Activated naive CD4-positive, alpha-beta T cell treated with anti-CD3 and anti-CD28 coated beads for 36 hours (primary cell): ENCODE measurements at regions of chr5 and their contacts with region 1.

Region 1: DNA sequence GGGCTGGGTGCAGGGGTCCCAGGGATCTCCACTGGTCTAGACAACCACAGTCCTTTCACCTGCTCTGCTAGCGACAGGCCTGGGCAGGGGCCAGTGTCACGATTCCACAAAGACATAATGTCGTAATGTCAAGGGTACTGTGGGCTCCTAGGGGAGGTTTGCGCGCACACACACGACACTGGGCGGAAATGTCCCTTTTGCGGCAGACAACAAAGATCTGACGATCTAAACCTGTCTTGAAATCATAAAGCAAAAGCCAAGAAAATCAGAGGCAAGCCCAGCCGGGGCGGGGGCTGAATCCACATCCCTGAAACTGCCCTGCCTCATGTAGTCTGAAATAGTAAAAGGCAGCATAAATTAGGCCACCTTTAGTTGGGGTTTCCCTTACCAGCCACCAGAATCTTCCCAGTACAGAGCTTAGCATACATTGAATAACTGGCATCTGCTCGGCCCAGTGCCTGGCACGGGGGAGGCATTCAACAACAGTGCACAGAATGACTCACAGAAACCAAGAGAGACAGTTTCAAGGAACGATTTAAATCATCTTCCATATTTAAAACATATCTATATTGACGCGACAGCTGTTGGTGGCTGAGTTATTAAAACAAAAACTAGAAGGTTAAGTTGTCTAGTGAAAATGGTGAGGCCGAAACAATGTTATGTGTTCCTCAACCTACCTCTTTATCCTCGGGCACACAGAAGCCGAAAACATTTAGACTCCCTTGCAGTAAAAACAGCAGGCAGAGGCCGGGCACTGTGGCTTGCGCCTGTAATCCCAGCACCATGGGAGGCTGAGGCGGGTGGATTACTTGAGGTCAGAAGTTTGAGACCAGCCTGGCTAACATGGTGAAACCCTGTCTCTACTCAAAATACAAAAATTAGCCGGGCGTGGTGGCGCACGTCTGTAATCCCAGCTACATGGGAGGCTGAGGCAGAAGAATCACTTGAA is 151.0 kb downstream of the MYO10 start:
- DNase-seq: peak; percentile 70
- H3K4me3 Mint-ChIP-seq: no peak overlapping the region
- H3K27ac Mint-ChIP-seq: no peak overlapping the region
- H3K4me1 Mint-ChIP-seq: peaks cover 18% of the 10 kb centered on the region
- H3K27me3 Mint-ChIP-seq: no peaks in the 10 kb centered on the region

Region 2: DNA sequence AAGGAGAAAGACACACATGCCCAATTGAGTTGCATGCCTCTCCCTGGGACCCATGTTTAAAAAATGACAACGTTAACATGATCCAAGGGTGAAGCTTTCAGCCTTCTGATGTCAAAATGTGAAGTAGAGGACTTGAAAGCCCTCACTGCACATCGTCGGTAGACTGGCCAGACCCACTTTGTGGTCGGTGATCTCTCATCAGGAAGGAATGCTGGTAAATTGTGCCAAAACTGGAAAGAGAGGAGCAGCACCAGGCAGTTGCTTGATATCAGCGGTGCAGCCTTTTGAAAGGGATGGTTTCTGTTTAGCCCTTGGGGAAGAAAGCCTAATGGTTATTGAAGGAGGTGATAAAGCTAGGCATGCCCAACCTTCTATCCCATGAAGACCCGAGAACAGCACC is 480.3 kb before region 1 on chr5:
- CTCF ChIA-PET with region 1: no interaction called
- intact Hi-C with region 1: no loop called
- DNase-seq: no peak
- H3K4me3 Mint-ChIP-seq: no peak overlapping the region
- H3K27ac Mint-ChIP-seq: no peak overlapping the region
- H3K4me1 Mint-ChIP-seq: no peaks in the 10 kb centered on the region
- H3K27me3 Mint-ChIP-seq: no peaks in the 10 kb centered on the region

Region 3: DNA sequence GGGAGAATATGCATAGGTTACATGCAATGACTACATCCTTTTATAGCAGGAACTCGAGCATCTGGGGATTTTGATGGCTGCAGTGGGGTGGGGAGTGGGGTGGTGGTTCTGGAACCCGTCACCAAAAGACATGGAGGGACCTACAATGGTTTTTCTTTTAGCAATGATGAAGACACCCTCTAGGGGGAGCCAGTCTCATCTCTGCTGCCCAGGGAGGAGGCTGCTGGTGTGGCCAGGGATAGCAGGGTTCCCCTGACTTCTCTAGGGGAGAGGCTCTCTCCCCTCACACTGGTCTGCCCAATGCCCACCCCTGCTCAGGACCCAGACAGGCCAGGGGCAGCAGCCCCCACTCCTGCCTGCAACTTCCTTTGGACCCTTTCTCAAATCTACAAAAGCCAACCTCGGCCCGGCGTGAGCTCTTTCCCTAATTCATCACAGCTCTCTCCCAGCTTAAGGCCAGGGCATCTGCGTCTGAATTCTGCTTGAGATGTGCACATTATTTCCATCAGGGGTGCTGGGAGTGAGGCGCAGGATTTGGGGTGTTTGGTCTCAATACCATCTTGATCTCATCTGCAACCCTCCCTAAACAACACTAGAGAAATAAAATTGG is 94.8 kb before region 1 on chr5:
- CTCF ChIA-PET with region 1: no interaction called
- intact Hi-C with region 1: loop called (anchors 10 kb)
- DNase-seq: peak; percentile 36
- H3K4me3 Mint-ChIP-seq: no peak overlapping the region
- H3K27ac Mint-ChIP-seq: no peak overlapping the region
- H3K4me1 Mint-ChIP-seq: peaks cover 3% of the 10 kb centered on the region
- H3K27me3 Mint-ChIP-seq: no peaks in the 10 kb centered on the region

Region 4: DNA sequence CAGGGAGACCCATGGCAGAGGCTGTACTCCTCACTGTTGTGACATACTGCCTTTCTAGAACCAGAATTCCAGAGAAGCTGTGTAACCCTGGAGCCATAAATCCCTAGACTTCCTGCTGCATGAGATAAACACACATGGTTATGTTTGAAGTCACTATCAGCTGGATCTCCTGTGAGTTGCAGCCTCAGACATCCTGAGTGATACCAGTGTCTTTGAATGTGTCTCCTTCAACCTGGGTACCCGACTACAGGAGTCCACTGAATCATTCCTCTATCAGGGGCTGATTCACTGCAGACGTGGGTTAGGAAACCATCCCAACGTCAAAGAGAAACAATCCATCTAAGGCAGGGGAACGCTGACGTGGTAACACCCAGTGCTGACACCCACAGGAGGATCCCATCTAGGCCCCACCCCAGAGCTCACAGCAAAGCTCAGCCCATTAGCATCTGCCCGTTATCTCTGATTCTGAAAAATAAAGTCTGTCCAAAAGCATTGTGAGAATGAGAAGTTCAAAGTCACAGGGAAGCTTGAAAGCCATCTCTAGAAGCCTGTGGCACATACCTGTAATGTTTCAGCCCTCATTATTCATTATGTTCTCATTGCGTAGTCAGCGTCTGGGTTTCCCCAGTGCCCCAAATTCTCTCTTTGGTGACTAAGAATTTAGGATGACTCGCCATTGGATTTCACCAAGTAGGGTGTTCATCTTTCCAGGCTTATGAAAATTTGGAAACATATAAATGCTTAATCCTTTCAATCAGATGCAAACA is 396.0 kb after region 1 on chr5:
- CTCF ChIA-PET with region 1: interaction called, 3 read pairs
- intact Hi-C with region 1: loop called (anchors 1 kb)
- DNase-seq: peak; percentile 49
- H3K4me3 Mint-ChIP-seq: no peak overlapping the region
- H3K27ac Mint-ChIP-seq: peak overlapping the region; percentile 14
- H3K4me1 Mint-ChIP-seq: peaks cover 8% of the 10 kb centered on the region
- H3K27me3 Mint-ChIP-seq: peaks cover 2% of the 10 kb centered on the region

Region 5: GRCh38 chr5:18702821-18703220 is 1917.7 kb after region 1 on chr5:
- CTCF ChIA-PET with region 1: no interaction called
- intact Hi-C with region 1: no loop called
- DNase-seq: no peak
- H3K4me3 Mint-ChIP-seq: no peak overlapping the region
- H3K27ac Mint-ChIP-seq: no peak overlapping the region
- H3K4me1 Mint-ChIP-seq: peaks cover 11% of the 10 kb centered on the region
- H3K27me3 Mint-ChIP-seq: no peaks in the 10 kb centered on the region